ENCODE measurements at regions of chr3 and their contacts with region 1.

Region 1: DNA sequence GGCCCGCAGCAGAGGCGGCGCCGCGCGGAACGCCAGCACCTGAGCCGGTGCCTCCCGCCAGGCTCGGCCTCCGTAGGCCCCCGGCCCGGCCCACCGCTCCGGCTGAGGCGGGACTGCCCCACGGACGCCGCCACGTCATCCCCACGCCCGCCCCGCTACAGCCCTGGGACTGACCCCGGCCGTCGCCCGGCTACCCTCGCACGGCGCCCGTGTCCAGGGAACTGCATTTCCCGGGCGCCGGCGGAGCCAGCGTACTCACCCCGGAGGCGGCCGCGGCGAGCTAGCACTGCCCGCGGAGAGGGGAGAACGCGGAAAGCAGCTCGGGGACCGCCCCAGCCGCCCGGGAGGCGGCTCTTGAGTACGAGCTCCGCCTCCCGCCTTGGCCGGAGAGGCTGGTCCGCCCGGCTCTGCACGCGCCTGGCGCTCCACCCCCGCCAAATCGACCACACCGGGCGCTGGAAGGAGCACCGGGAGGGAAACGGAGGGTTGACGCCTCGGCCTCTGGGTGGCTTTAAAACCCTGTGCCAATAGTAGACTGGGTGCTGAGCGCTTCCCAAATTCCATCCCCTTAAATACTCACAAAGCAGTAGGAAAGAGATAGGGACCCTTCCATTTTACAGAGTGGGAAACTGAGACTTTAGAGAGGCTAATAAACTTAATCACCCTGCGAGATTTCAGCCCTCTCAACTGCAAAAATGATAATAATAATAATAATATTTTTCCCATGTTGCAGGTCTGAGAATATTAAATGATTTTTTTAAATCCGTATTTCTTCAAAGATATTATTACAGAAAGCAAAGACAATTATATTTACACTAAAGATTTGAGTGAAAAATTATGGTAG is at the start of gene B4GALT4:
- DNase-seq: peak; percentile 89 to 93 (median 92)
- ATAC-seq: peak; percentile 95
- H3K4me3 ChIP-seq: peak within 1 kb of the TSS; percentile 53 to 86
- H3K27ac ChIP-seq: peak within 1 kb of the TSS; percentile 91 to 99 (median 96)
- H3K4me1 ChIP-seq: peaks cover 23% of the 10 kb centered on the region
- H3K27me3 ChIP-seq: no peaks in the 10 kb centered on the region
- CTCF ChIP-seq: peak in 1 of 7 experiments; percentile 23
- POLR2A ChIP-seq: peak; percentile 94 to 96 (median 95)
- total RNA-seq, gene B4GALT4: 12.5 to 14.8 TPM

Region 2: DNA sequence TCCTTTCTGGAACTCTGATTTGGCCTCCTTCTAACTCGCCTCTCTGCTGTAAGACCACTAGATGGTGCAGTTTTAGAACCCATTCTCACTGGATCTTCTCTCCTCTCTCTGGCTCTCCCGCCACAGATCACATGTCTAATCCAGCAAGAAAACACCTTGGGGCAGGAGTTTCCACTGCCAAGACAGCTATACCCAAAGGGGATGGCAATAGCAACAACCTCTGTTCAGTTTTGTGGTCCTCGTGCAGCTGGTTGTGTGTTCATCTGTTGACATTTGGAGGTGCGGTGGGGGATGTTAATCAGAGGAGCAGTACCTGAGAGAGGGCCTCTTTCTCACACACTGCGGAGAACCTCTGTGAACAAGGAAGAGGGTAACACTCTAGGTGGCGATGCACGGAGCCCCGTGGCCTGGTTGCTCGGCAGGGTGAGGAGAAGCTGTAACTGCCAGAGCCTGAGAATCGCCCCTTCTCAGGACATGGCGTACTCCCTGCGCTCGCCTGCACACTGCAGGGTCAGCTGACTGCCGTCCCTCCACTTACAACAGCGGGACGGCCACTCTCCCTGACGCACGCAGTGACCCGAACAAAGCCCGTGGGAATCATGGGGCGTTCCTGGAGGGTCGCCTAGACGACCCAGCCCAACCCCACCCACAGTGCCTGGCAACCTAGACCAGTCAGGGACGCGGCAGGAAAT is 95.2 kb before region 1 on chr3 and contains the start of gene TEX55:
- intact Hi-C with region 1: loop called (anchors 10 kb)
- DNase-seq: peak in 2 of 4 donors; percentile 27 to 36
- ATAC-seq: peak; percentile 90
- H3K4me3 ChIP-seq: no peak within 1 kb of the TSS
- H3K27ac ChIP-seq: no peak within 1 kb of the TSS
- H3K4me1 ChIP-seq: peaks cover 7% of the 10 kb centered on the region
- H3K27me3 ChIP-seq: no peaks in the 10 kb centered on the region
- CTCF ChIP-seq: peak; percentile 23 to 75 (median 63)
- POLR2A ChIP-seq: no peak
- total RNA-seq, gene TEX55: not detected

Region 3: GRCh38 chr3:119420196-119420595 is 179.4 kb after region 1 on chr3:
- intact Hi-C with region 1: no loop called
- DNase-seq: no peak
- ATAC-seq: no peak
- H3K4me3 ChIP-seq: no peak overlapping the region
- H3K27ac ChIP-seq: no peak overlapping the region
- H3K4me1 ChIP-seq: no peaks in the 10 kb centered on the region
- H3K27me3 ChIP-seq: no peaks in the 10 kb centered on the region
- CTCF ChIP-seq: peak in 1 of 7 experiments; percentile 11
- POLR2A ChIP-seq: no peak

Measured in body of pancreas (tissue), 4 donors.